ENCODE measurements at regions of chr9 and their contacts with region 1.

Region 1: DNA sequence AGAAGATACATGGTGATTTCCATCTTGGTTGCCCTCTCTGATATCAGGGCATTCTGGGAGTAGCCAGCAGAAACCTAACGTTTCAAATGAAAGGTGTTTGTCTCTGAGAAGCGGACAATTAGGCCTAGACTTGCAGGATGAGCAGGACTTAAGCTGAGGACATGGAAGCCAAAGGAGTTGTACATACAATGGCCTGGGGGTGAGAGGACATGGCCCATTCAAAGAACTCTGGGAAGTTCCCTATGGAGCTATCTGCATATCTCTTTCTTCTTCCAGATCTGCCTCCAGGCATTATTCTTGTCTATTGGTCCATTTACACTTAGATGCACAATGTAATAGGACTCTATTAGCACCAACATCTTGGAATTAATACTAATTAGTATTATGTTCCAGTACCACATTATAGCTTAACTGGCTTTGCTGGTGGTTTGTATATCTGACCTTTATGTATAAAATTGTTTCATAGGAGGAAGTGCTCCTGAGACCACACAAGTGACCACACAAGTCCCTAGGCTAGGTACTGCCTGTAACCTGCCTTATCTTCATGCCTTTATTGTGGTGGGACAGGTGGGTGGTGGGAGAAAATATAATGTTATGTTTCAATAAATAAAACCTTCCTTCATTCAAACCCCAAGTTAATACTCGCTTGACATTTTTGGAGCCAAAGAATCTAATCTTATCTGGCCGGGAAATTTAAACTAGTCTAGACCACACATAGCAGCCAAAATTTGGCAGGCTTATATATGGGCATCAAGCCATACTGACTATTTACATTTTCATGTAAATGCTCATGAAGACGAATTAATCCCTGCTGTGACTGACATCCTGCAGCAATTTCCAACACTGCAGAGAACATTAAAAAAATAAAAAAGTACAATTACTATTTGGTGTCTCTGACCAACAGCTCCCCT is 52.1 kb upstream of the EQTN start:
- DNase-seq: no peak
- CTCF ChIP-seq: no peak

Region 2: GRCh38 chr9:27529316-27530278 is 180.6 kb after region 1 on chr9 and contains the start of gene MOB3B:
- in situ Hi-C with region 1: loop called (anchors 5 kb)
- DNase-seq: peak; percentile 85
- CTCF ChIP-seq: peak; percentile 84